Naive thymus-derived CD4-positive, alpha-beta T cell (primary cell): ENCODE measurements at regions of chr3 and their contacts with region 1.

Region 1: DNA sequence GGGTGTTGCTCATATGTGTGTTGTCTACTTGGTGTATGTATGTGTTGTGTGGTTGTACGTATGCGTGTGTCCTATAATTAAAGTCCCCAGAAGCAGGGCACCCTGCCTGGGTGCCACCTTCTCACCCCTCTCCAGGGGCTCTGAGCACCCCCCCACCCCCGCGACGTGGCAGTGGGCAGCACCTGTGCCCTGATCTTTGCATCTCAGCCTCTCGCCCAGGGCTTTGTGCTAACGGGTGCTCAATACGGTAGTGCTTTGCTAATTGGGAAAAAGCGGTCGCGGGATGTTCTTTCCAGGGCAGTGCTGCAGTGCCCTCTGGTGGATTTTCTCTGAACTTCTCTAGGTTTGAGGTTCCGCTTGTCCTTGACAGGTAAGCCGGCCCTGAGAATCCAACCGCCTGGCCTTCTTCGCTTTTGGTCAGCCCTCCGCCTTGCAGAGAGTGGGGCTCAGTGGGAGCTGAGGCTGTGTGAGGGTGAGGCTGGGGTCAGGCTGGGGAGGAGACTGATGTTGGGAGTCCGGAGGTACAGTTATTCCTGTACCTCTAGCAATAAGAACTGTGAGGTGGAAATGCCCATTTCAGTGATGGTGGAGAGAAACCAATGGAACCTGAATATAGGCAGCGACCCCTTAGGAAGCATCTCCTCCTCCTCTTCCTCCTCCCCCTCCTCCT is 17.6 kb upstream of the EPHB3 start:
- DNase-seq: peak; percentile 47 to 86 (median 80)
- ATAC-seq: peak; percentile 87
- H3K4me3 ChIP-seq: no peak overlapping the region
- H3K4me3 Mint-ChIP-seq: peak overlapping the region in 9 of 10 donors; percentile 39 to 67 (median 58)
- H3K27ac ChIP-seq: no peak overlapping the region
- H3K27ac Mint-ChIP-seq: peak overlapping the region in 5 of 9 donors; percentile 28 to 86 (median 52)
- H3K4me1 ChIP-seq: peaks cover 0 to 3% of the 10 kb centered on the region in 2 donors
- H3K4me1 Mint-ChIP-seq: peaks cover 7 to 36% (median 26%) of the 10 kb centered on the region in 7 donors
- H3K27me3 ChIP-seq: no peaks in the 10 kb centered on the region
- H3K27me3 Mint-ChIP-seq: peaks cover 0 to 30% (median 19%) of the 10 kb centered on the region in 5 donors

Region 2: GRCh38 chr3:184145111-184145524 is 398.9 kb before region 1 on chr3:
- CTCF ChIA-PET with region 1: no interaction called
- POLR2A ChIA-PET with region 1: no interaction called
- intact Hi-C with region 1: loop called in 1 of 2 experiments (anchors 2 kb)
- DNase-seq: peak in 7 of 9 donors; percentile 22 to 50 (median 34)
- ATAC-seq: peak; percentile 77
- H3K4me3 ChIP-seq: no peak overlapping the region
- H3K4me3 Mint-ChIP-seq: no peak overlapping the region
- H3K27ac ChIP-seq: no peak overlapping the region
- H3K27ac Mint-ChIP-seq: peak overlapping the region in 1 of 9 donors; percentile 80
- H3K4me1 ChIP-seq: no peaks in the 10 kb centered on the region
- H3K4me1 Mint-ChIP-seq: peaks cover 0 to 7% (median 0%) of the 10 kb centered on the region in 7 donors
- H3K27me3 ChIP-seq: no peaks in the 10 kb centered on the region
- H3K27me3 Mint-ChIP-seq: no peaks in the 10 kb centered on the region

Region 3: GRCh38 chr3:184289426-184289938 is 254.5 kb before region 1 on chr3:
- CTCF ChIA-PET with region 1: no interaction called
- POLR2A ChIA-PET with region 1: no interaction called
- intact Hi-C with region 1: loop called in 1 of 2 experiments (anchors 1 kb)
- DNase-seq: peak in 8 of 9 donors; percentile 18 to 71 (median 38)
- ATAC-seq: peak; percentile 67
- H3K4me3 ChIP-seq: no peak overlapping the region
- H3K4me3 Mint-ChIP-seq: no peak overlapping the region
- H3K27ac ChIP-seq: no peak overlapping the region
- H3K27ac Mint-ChIP-seq: peak overlapping the region in 1 of 9 donors; percentile 34
- H3K4me1 ChIP-seq: no peaks in the 10 kb centered on the region
- H3K4me1 Mint-ChIP-seq: no peaks in the 10 kb centered on the region
- H3K27me3 ChIP-seq: no peaks in the 10 kb centered on the region
- H3K27me3 Mint-ChIP-seq: peaks cover 9 to 28% (median 11%) of the 10 kb centered on the region in 5 donors

Region 4: DNA sequence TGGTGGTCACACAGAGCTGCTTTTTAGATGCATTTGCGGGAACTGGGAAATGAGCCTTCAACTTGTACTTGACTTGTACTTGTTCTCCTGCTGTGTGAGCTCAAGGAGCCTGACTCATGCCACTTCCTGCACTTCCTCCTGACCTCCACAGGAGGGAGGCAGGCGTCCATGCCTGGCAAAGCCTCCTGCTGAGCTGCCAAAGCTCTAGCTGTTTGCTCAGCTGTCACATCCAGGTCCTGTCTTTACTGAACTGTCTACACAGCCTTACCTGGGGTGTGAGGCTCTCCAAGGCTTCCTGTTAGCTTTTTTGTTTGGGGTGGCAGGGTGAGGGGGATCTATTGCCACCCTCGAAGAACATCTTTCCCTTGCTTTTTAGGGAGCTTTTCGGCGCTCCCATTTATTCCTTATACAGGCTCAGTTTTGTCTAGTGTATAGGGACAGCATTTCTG is 172.4 kb before region 1 on chr3:
- CTCF ChIA-PET with region 1: interaction called, 32 read pairs
- POLR2A ChIA-PET with region 1: no interaction called
- intact Hi-C with region 1: loop called (anchors 1 kb)
- DNase-seq: peak; percentile 42 to 70 (median 59)
- ATAC-seq: peak; percentile 96
- H3K4me3 ChIP-seq: no peak overlapping the region
- H3K4me3 Mint-ChIP-seq: no peak overlapping the region
- H3K27ac ChIP-seq: no peak overlapping the region
- H3K27ac Mint-ChIP-seq: peak overlapping the region in 8 of 9 donors; percentile 4 to 65 (median 26)
- H3K4me1 ChIP-seq: no peaks in the 10 kb centered on the region
- H3K4me1 Mint-ChIP-seq: peaks cover 5 to 18% (median 10%) of the 10 kb centered on the region in 7 donors
- H3K27me3 ChIP-seq: no peaks in the 10 kb centered on the region
- H3K27me3 Mint-ChIP-seq: peaks cover 4 to 27% (median 8%) of the 10 kb centered on the region in 5 donors

Region 5: GRCh38 chr3:184469423-184469822 is 74.6 kb before region 1 on chr3:
- CTCF ChIA-PET with region 1: interaction called, 4 read pairs
- POLR2A ChIA-PET with region 1: no interaction called
- intact Hi-C with region 1: loop called (anchors 1 kb)
- DNase-seq: peak in 1 of 9 donors; percentile 29
- ATAC-seq: no peak
- H3K4me3 ChIP-seq: no peak overlapping the region
- H3K4me3 Mint-ChIP-seq: no peak overlapping the region
- H3K27ac ChIP-seq: no peak overlapping the region
- H3K27ac Mint-ChIP-seq: no peak overlapping the region
- H3K4me1 ChIP-seq: peaks cover 0 to 6% of the 10 kb centered on the region in 2 donors
- H3K4me1 Mint-ChIP-seq: peaks cover 4 to 29% (median 14%) of the 10 kb centered on the region in 7 donors
- H3K27me3 ChIP-seq: no peaks in the 10 kb centered on the region
- H3K27me3 Mint-ChIP-seq: peaks cover 12 to 38% (median 22%) of the 10 kb centered on the region in 5 donors

Region 6: GRCh38 chr3:184523825-184524615 is 20.0 kb before region 1 on chr3:
- CTCF ChIA-PET with region 1: interaction called, 7 read pairs
- POLR2A ChIA-PET with region 1: no interaction called
- intact Hi-C with region 1: loop called in 1 of 2 experiments (anchors 1 kb)
- DNase-seq: no peak
- ATAC-seq: peak; percentile 75
- H3K4me3 ChIP-seq: no peak overlapping the region
- H3K4me3 Mint-ChIP-seq: peak overlapping the region in 7 of 10 donors; percentile 31 to 92 (median 55)
- H3K27ac ChIP-seq: no peak overlapping the region
- H3K27ac Mint-ChIP-seq: peak overlapping the region in 2 of 9 donors; percentile 32 to 51
- H3K4me1 ChIP-seq: peaks cover 0 to 5% of the 10 kb centered on the region in 2 donors
- H3K4me1 Mint-ChIP-seq: peaks cover 0 to 22% (median 15%) of the 10 kb centered on the region in 7 donors
- H3K27me3 ChIP-seq: peaks cover 0 to 8% of the 10 kb centered on the region in 2 donors
- H3K27me3 Mint-ChIP-seq: peaks cover 2 to 57% (median 23%) of the 10 kb centered on the region in 5 donors

Region 7: DNA sequence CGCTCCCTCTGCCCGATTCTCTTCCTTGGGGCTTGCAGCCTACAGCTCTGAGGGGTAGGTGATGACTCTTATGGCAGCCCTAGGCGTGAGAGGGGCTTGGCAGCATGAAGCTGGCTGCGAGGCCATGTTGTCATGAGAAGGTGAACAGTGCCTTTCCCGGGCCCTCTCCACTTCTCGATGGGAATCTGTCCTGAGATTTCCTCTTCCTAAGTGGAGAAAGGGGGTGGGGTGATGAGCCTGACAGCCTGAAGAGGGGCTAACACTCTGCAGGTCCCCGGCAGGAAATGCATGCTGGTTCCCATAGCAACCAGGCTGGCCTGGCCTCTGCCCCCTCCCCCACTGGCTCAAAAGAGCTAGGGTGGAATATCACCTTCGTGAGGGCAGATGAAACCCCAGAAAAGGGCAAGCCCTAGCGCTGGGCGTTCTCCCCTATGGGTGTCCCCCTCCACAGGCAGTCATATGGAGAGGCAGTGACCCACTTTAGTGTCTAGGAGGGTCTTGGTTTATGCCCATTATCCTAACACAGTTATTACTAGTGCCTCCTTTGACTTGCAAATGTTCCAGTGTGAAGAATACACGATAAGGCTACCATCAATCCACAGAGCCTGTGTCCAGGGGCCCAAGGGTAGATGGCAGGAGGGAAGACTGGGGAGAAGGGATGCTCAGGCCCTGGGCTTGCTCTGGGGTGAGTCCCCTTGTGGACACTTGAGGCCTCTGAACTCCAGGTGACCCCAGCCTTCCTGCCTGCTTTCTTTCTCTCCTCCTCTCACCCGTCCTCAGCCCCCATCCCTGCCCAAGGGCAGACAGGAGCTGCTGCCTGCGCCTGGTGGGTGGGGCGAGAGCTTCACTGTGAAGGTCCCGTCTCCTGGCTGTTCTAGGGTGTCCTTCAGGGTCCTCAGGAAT is 30.8 kb after region 1 on chr3:
- CTCF ChIA-PET with region 1: no interaction called
- POLR2A ChIA-PET with region 1: no interaction called
- intact Hi-C with region 1: no loop called
- DNase-seq: no peak
- ATAC-seq: no peak
- H3K4me3 ChIP-seq: no peak overlapping the region
- H3K4me3 Mint-ChIP-seq: no peak overlapping the region
- H3K27ac ChIP-seq: no peak overlapping the region
- H3K27ac Mint-ChIP-seq: no peak overlapping the region
- H3K4me1 ChIP-seq: no peaks in the 10 kb centered on the region
- H3K4me1 Mint-ChIP-seq: peaks cover 0 to 3% (median 0%) of the 10 kb centered on the region in 7 donors
- H3K27me3 ChIP-seq: no peaks in the 10 kb centered on the region
- H3K27me3 Mint-ChIP-seq: peaks cover 0 to 30% (median 26%) of the 10 kb centered on the region in 5 donors

Region 8: DNA sequence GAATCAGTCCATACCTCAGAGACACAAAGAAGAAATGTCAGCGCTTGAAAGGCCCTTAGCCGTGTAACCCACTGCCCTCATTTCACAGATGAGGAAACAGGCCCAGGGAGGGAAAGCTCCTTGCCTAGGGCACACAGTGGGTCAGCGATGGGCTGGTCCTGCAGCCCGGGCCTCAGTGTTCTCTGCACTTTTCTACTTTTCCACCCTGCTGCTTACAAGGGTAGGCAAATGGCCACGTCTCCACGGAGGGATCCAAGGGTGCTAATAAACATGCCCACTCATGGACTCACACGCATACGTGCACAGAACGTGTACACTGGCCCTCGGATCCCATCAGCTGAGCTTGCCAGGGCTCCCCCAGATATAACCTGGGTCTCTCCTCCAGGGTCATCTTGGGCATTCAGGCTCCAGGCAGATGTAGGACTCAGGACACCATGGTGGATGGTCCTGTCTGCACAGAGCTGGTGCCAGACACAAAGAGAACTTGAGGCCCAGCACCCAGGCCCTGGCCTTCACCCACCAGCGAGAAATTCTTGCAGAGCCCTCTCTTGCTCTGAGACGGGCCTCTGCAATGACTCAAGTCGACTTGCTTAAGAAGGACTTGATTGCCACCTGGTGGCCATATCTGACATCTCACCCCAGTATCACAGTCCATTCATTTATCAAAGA is 233.5 kb after region 1 on chr3:
- CTCF ChIA-PET with region 1: interaction called, 5 read pairs
- POLR2A ChIA-PET with region 1: no interaction called
- intact Hi-C with region 1: loop called (anchors 1 to 5 kb)
- DNase-seq: peak; percentile 35 to 84 (median 78)
- ATAC-seq: peak; percentile 96
- H3K4me3 ChIP-seq: no peak overlapping the region
- H3K4me3 Mint-ChIP-seq: no peak overlapping the region
- H3K27ac ChIP-seq: no peak overlapping the region
- H3K27ac Mint-ChIP-seq: no peak overlapping the region
- H3K4me1 ChIP-seq: no peaks in the 10 kb centered on the region
- H3K4me1 Mint-ChIP-seq: peaks cover 0 to 3% (median 0%) of the 10 kb centered on the region in 7 donors
- H3K27me3 ChIP-seq: peaks cover 0 to 4% of the 10 kb centered on the region in 2 donors
- H3K27me3 Mint-ChIP-seq: peaks cover 6 to 28% (median 19%) of the 10 kb centered on the region in 5 donors

Region 9: DNA sequence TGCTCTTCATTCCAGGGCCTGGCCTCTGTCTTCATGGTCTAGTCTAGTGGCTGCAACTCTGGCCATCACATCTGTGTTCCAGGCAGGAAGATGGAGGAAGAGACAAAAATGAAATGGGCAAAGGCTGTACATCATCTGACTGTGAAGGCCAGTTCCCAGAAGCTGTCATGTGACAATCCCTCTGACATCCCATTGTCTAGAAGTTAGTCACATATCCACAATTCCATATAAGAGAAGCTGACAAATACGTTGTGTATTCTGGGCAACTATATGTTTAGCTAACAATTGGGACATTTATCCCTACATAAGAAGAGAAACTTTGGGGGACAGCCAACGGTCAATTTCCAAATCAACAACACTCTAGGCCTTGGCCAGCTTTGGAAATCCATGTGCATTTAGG is 643.4 kb after region 1 on chr3:
- CTCF ChIA-PET with region 1: no interaction called
- POLR2A ChIA-PET with region 1: no interaction called
- intact Hi-C with region 1: no loop called
- DNase-seq: no peak
- ATAC-seq: no peak
- H3K4me3 ChIP-seq: no peak overlapping the region
- H3K4me3 Mint-ChIP-seq: peak overlapping the region in 1 of 10 donors; percentile 15
- H3K27ac ChIP-seq: no peak overlapping the region
- H3K27ac Mint-ChIP-seq: no peak overlapping the region
- H3K4me1 ChIP-seq: no peaks in the 10 kb centered on the region
- H3K4me1 Mint-ChIP-seq: no peaks in the 10 kb centered on the region
- H3K27me3 ChIP-seq: no peaks in the 10 kb centered on the region
- H3K27me3 Mint-ChIP-seq: peaks cover 0 to 8% (median 3%) of the 10 kb centered on the region in 5 donors

Region 10: DNA sequence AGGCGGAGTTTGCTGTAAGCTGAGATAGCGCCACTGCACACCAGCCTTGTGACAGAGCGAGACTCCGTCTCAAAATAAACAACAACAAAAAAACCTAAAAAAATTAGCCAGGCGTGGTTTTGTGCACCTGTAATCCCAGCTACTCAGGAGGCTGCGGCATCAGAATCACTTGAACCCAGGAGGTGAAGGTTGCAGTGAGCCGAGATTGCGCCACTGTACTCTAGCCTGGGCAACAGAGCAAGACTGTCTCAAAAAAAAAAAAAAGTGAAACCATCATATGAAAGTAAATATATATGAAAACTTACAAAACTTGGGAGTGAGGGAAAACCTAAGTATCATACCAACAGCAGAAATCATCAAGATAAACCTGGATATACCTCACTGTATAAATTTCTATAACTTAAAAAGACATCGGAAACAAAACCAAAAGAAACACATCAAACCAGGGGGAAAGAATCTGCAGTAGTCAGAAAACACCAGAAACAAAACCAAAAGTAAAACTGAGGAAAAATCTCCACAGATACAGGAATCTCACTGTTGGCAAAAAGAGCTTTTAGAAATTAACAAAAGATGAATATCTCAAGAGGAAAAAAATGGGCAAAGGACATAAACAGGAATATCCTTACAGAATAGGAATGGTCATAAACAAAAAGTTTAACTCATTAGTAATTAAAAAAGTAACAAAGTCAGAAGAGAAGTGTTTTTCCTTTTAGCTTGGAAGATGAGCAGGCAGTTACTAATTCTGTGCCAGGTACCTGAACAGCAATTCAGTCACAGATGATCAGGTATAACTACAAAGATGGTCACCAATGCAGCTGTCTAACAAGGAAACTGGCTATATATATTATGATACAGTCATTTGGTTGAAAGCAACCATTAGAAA is 1523.6 kb after region 1 on chr3:
- CTCF ChIA-PET with region 1: no interaction called
- POLR2A ChIA-PET with region 1: no interaction called
- intact Hi-C with region 1: no loop called
- DNase-seq: peak in 4 of 9 donors; percentile 2 to 21 (median 11)
- ATAC-seq: peak; percentile 41
- H3K4me3 ChIP-seq: peak overlapping the region; percentile 24
- H3K4me3 Mint-ChIP-seq: peak overlapping the region; percentile 54 to 93 (median 80)
- H3K27ac ChIP-seq: no peak overlapping the region
- H3K27ac Mint-ChIP-seq: peak overlapping the region; percentile 25 to 81 (median 47)
- H3K4me1 ChIP-seq: no peaks in the 10 kb centered on the region
- H3K4me1 Mint-ChIP-seq: peaks cover 3 to 19% (median 16%) of the 10 kb centered on the region in 7 donors
- H3K27me3 ChIP-seq: no peaks in the 10 kb centered on the region
- H3K27me3 Mint-ChIP-seq: peaks cover 5 to 46% (median 12%) of the 10 kb centered on the region in 5 donors